Panc1 (cell line): ENCODE measurements at regions of chr3 and their contacts with region 1.

Region 1: GRCh38 chr3:196739671-196740480 is at the start of gene PAK2:
- DNase-seq: peak; percentile 43
- ATAC-seq: peak; percentile 97
- H3K4me3 ChIP-seq: peak within 1 kb of the TSS; percentile 94
- H3K27ac ChIP-seq: peak within 1 kb of the TSS; percentile 99
- H3K4me1 ChIP-seq: peaks cover 17% of the 10 kb centered on the region
- H3K27me3 ChIP-seq: no peaks in the 10 kb centered on the region
- CTCF ChIP-seq: no peak
- total RNA-seq, gene PAK2: 185 TPM

Region 2: DNA sequence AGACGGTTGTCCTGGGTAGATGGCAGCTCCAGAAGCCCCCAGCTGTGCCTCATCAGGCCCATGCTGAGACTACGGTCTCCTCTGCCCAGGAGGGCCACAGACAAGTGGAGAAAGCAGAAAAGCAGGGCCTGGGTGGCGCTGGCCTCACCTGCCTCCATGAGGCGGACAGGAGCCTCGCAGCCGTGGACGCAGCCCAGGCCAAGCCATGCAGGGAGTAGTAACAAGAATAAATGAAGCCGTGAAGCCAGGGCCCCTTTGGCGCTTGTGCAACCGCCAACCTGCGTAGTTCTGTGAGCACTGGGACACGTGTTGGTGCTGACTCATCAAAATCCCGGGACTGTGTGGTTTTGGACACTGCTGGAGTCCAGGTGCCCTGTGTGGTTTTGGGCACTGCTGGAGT is 915.9 kb before region 1 on chr3:
- CTCF ChIA-PET with region 1: no interaction called
- POLR2A ChIA-PET with region 1: no interaction called
- in situ Hi-C with region 1: no loop called
- intact Hi-C with region 1: no loop called
- DNase-seq: no peak
- ATAC-seq: peak; percentile 56
- H3K4me3 ChIP-seq: no peak overlapping the region
- H3K27ac ChIP-seq: no peak overlapping the region
- H3K4me1 ChIP-seq: no peaks in the 10 kb centered on the region
- H3K27me3 ChIP-seq: no peaks in the 10 kb centered on the region; the same call in 1 of the 2 replicates
- CTCF ChIP-seq: no peak

Region 3: DNA sequence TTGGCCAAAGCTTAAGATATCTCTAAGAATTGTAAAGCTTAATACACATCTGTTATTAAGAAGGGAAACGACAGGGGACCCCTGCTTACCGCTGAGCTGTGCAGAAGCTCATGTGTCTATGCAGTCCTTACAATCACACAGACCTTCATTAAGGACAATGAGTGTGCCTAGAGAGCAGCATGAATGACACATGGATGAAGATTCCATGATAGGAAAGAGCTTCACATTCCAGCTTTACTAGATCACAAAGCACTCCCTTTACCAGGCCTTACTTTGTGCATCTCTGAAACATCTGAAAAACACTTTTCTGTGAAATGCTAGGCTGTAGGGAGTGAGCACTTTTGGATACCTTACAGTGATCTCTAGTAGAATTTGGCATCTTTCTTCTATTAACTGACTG is 268.3 kb before region 1 on chr3:
- CTCF ChIA-PET with region 1: no interaction called
- POLR2A ChIA-PET with region 1: interaction called, 15 read pairs
- in situ Hi-C with region 1: no loop called
- intact Hi-C with region 1: no loop called
- DNase-seq: no peak
- ATAC-seq: peak; percentile 34; the same call in 1 of the 2 replicates
- H3K4me3 ChIP-seq: no peak overlapping the region
- H3K27ac ChIP-seq: no peak overlapping the region
- H3K4me1 ChIP-seq: no peaks in the 10 kb centered on the region
- H3K27me3 ChIP-seq: no peaks in the 10 kb centered on the region
- CTCF ChIP-seq: no peak

Region 4: GRCh38 chr3:196711838-196712513 is 27.9 kb before region 1 on chr3 and contains the starts of genes CEP19 and PIGX:
- CTCF ChIA-PET with region 1: no interaction called
- POLR2A ChIA-PET with region 1: interaction called, 12 read pairs
- in situ Hi-C with region 1: no loop called
- intact Hi-C with region 1: no loop called
- DNase-seq: peak; percentile 48
- ATAC-seq: peak; percentile 95
- H3K4me3 ChIP-seq: peak within 1 kb of the TSS; percentile 83 to 92
- H3K27ac ChIP-seq: peak within 1 kb of the TSS; percentile 93
- H3K4me1 ChIP-seq: peaks cover 19% of the 10 kb centered on the region
- H3K27me3 ChIP-seq: no peaks in the 10 kb centered on the region
- CTCF ChIP-seq: no peak
- total RNA-seq, gene CEP19: 7.1 TPM
- total RNA-seq, gene PIGX: 85.7 TPM

Region 5: GRCh38 chr3:196942226-196942914 is 202.5 kb after region 1 on chr3 and contains the start of gene NCBP2:
- CTCF ChIA-PET with region 1: no interaction called
- POLR2A ChIA-PET with region 1: interaction called, 13 read pairs
- in situ Hi-C with region 1: no loop called
- intact Hi-C with region 1: no loop called
- DNase-seq: peak; percentile 86
- ATAC-seq: peak; percentile 94
- H3K4me3 ChIP-seq: peak within 1 kb of the TSS; percentile 94 to 99
- H3K27ac ChIP-seq: peak within 1 kb of the TSS; percentile 92
- H3K4me1 ChIP-seq: peaks cover 15% of the 10 kb centered on the region
- H3K27me3 ChIP-seq: no peaks in the 10 kb centered on the region
- CTCF ChIP-seq: peak; percentile 90
- total RNA-seq, gene NCBP2: 122 TPM